Left lung (tissue), 14 donors: ENCODE measurements at regions of chr3 and their contacts with region 1.

Region 1: GRCh38 chr3:65245133-65246063 is 557.6 kb upstream of the ADAMTS9 start:
- DNase-seq: peak in 2 of 4 donors; percentile 16 to 45
- ATAC-seq: peak; percentile 42
- H3K4me3 ChIP-seq: no peak overlapping the region
- H3K27ac ChIP-seq: no peak overlapping the region
- H3K4me1 ChIP-seq: no peaks in the 10 kb centered on the region
- H3K27me3 ChIP-seq: no peaks in the 10 kb centered on the region
- CTCF ChIP-seq: peak in 1 of 2 donors; percentile 43

Region 2: GRCh38 chr3:64533617-64534317 is 711.6 kb before region 1 on chr3:
- intact Hi-C with region 1: loop called in 1 of 2 experiments (anchors 10 kb)
- DNase-seq: peak in 3 of 4 donors; percentile 77 to 93 (median 88)
- ATAC-seq: peak; percentile 97
- H3K4me3 ChIP-seq: no peak overlapping the region
- H3K27ac ChIP-seq: no peak overlapping the region
- H3K4me1 ChIP-seq: peaks cover 0 to 10% of the 10 kb centered on the region in 2 donors
- H3K27me3 ChIP-seq: no peaks in the 10 kb centered on the region
- CTCF ChIP-seq: peak; percentile 60 to 77

Region 3: DNA sequence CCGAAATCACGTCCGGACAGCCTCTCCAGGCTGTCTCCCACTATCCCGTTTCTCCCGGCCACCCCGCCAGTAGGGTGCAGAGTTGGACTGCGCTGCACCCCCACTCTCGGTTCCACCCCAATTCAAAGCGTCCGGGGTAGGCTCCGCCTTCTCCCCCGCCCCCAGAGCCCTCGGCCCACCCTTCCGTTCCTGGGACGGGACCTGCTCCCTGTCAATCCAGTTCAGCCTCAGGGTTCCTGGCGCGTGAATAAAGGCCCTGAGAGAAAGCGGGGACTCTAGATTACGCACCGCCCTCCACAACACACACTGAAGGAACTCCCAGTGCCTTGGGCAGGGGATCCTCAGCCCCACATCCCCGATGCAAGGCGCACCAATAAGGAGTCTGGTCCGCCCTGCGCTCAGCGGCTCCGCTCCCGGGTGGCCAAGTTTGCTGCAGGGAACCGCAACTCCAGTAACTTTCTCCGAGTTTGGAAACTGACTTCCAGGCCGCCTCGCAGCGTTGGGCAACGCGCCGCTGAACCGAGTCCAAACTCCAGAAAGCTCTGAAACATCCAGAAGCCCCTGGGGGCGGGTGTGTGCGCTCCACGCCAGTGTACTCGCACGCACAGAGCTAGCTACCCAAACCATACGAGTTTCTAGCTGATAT is 559.5 kb before region 1 on chr3:
- intact Hi-C with region 1: loop called in 1 of 2 experiments (anchors 10 kb)
- DNase-seq: peak; percentile 92 to 97 (median 94)
- ATAC-seq: peak; percentile 86
- H3K4me3 ChIP-seq: peak overlapping the region; percentile 43 to 59
- H3K27ac ChIP-seq: peak overlapping the region; percentile 87 to 97
- H3K4me1 ChIP-seq: peaks cover 3 to 18% of the 10 kb centered on the region in 2 donors
- H3K27me3 ChIP-seq: peaks cover 0 to 42% of the 10 kb centered on the region in 2 donors
- CTCF ChIP-seq: no peak